Cardiac septum (tissue), 1 donor: ENCODE measurements at regions of chr13 and their contacts with region 1.

Region 1: GRCh38 chr13:25232937-25233515 is 54.3 kb downstream of the MTMR6 start:
- DNase-seq: no peak

Region 2: GRCh38 chr13:25046985-25047511 is 186.0 kb before region 1 on chr13:
- intact Hi-C with region 1: no loop called
- DNase-seq: no peak

Region 3: GRCh38 chr13:25286969-25287961 is 54.2 kb after region 1 on chr13 and contains the start of gene MTMR6:
- intact Hi-C with region 1: loop called (anchors 5 kb)
- DNase-seq: peak; percentile 99
- total RNA-seq, gene MTMR6: 16.1 TPM

Region 4: GRCh38 chr13:25375727-25376358 is 142.8 kb after region 1 on chr13:
- intact Hi-C with region 1: loop called (anchors 5 kb)
- DNase-seq: no peak